MCF 10A (cell line): ENCODE measurements at regions of chr2 and their contacts with region 1.

Region 1: GRCh38 chr2:200901459-200902072 is 12.4 kb downstream of the NIF3L1 start:
- DNase-seq: peak; percentile 90
- H3K4me3 Mint-ChIP-seq: no peak overlapping the region
- H3K27ac Mint-ChIP-seq: no peak overlapping the region
- H3K4me1 Mint-ChIP-seq: no peaks in the 10 kb centered on the region
- H3K27me3 Mint-ChIP-seq: no peaks in the 10 kb centered on the region
- CTCF ChIP-seq: peak; percentile 88

Region 2: GRCh38 chr2:200888704-200889625 is 12.6 kb before region 1 on chr2 and contains the starts of genes NIF3L1 and PPIL3:
- CTCF ChIA-PET with region 1: interaction called, 7 read pairs
- POLR2A ChIA-PET with region 1: interaction called, 13 read pairs
- intact Hi-C with region 1: no loop called
- DNase-seq: peak; percentile 98
- H3K4me3 Mint-ChIP-seq: peak within 1 kb of the TSS; percentile 98
- H3K27ac Mint-ChIP-seq: peak within 1 kb of the TSS; percentile 98
- H3K4me1 Mint-ChIP-seq: peaks cover 21% of the 10 kb centered on the region
- H3K27me3 Mint-ChIP-seq: no peaks in the 10 kb centered on the region
- CTCF ChIP-seq: no peak
- total RNA-seq, gene NIF3L1: 19.3 and 26.1 TPM in 2 replicates
- total RNA-seq, gene PPIL3: 33.9 and 35.4 TPM in 2 replicates

Region 3: GRCh38 chr2:201182650-201183364 is 281.2 kb after region 1 on chr2 and contains the start of gene CASP10:
- CTCF ChIA-PET with region 1: interaction called, 12 read pairs
- POLR2A ChIA-PET with region 1: interaction called, 4 read pairs
- intact Hi-C with region 1: no loop called
- DNase-seq: peak; percentile 68
- H3K4me3 Mint-ChIP-seq: peak within 1 kb of the TSS; percentile 46
- H3K27ac Mint-ChIP-seq: no peak within 1 kb of the TSS
- H3K4me1 Mint-ChIP-seq: no peaks in the 10 kb centered on the region
- H3K27me3 Mint-ChIP-seq: no peaks in the 10 kb centered on the region
- CTCF ChIP-seq: no peak
- total RNA-seq, gene CASP10: 0.19 and 0.27 TPM in 2 replicates